ENCODE measurements at regions of chr21 and their contacts with region 1.

Region 1: DNA sequence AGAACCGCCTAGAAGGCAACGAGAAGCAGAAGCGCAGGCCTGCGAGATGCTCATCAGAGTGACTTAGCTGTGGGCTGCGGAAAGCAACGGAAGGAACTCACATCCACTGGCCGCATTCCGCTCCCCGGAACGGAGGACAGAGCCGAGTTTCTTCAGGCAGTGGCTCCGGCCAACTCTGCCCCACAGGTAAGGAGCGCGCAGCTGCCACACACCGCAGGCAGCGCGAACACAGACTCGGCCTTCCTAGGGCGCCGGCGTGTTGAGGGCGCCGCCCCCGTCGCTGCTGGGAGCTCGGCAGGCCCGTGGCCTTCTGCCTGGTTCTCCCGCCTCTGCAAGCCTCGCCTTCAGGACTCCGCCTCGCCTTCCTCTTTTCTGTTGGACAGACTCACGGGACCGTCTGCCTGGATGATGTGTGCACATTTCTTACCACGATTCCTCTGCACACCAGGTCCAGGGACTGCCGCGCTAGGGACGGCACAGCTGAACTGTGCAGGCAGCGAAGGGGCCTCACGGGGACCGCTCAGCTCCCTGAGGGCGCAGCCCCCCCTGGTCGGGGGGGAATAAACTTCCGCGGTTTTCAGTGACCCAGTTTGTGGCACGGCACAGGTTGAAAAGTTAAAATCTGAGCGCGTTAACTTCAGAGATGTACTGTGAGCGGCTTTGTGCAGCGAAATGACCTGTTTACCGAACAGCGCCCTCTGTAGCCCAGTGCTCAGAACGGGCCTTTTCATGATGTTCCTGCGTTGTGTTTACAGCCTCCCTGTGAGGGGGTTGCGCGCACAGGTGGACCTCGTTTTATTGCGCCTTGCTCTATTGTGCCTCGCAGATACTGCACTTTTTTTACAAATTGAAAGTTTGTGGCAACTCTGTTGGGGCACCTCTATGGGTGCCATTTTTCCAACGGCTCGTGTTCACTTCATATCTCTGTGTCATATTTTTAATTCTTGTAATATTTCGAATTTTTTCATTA is 15.8 kb downstream of the TCP10L start:
- DNase-seq: peak; percentile 82

Region 2: GRCh38 chr21:31911138-31911907 is 658.2 kb before region 1 on chr21:
- intact Hi-C with region 1: no loop called
- DNase-seq: no peak

Region 3: GRCh38 chr21:32359711-32360260 is 209.8 kb before region 1 on chr21:
- intact Hi-C with region 1: no loop called
- DNase-seq: peak; percentile 72

Region 4: DNA sequence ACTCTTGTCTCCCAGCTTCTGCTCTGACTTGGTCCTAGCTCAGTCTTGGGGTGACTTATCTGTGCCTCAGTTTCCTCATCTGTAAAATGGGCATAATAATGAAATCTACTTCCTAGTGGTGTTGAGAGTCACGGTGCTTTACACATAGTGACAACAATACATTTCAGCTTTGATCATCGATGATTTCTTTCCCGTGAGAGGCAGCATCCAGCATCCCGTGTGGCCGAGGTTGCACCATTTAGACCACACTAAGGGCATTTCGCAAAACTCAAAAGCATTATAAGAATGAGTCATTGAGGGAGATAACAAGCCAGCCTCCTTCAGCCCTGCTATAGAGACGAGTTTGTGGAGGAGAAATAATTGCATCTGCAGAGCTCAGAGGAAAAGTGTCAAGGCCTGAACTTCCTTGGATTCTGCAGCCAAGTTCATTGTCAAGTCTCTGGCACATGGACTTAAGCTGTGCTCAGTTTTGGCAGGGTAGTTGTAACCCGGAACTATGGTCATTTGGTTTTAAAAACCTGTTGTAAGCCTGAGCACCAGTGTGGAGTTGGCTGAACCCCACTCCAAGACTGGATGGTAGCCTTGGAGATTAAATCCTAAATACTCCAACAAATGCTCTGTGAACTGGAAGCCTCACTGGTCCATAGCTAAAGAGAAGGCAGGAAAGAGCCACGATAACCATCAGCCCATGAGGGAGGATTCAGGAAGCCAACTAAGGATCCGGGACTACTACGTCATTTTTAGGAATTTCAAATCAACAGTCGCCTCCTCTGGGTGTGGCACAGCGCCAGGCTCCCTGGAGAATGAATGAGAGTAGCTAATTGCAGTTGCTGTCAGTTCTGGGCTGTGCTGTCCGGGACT is 48.4 kb before region 1 on chr21:
- intact Hi-C with region 1: loop called (anchors 5 kb)
- DNase-seq: peak; percentile 88